Astrocyte of the cerebellum (primary cell): ENCODE measurements at regions of chr16 and their contacts with region 1.

Region 1: DNA sequence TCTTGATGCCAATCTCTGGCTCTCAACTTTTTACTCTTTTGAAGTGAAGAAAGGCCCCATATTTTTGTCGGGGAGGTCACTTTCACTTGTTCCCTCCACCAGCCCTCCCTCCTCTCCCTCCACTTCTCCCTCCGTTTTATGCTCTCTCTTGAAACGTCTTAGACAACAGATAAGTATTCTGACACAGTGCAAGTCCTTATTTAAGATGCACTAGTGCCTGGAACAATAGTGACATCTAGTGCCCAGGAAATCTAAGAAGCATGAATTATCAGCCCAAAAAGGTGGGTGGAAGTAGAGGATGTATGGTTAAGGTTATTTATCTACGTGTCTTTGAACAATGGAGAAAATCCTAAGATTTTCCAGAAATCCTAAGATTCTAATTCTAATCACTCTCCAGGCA is 17.9 kb downstream of the PSME3IP1 start:
- DNase-seq: peak; percentile 70
- H3K4me3 ChIP-seq: no peak overlapping the region
- CTCF ChIP-seq: peak; percentile 70

Region 2: DNA sequence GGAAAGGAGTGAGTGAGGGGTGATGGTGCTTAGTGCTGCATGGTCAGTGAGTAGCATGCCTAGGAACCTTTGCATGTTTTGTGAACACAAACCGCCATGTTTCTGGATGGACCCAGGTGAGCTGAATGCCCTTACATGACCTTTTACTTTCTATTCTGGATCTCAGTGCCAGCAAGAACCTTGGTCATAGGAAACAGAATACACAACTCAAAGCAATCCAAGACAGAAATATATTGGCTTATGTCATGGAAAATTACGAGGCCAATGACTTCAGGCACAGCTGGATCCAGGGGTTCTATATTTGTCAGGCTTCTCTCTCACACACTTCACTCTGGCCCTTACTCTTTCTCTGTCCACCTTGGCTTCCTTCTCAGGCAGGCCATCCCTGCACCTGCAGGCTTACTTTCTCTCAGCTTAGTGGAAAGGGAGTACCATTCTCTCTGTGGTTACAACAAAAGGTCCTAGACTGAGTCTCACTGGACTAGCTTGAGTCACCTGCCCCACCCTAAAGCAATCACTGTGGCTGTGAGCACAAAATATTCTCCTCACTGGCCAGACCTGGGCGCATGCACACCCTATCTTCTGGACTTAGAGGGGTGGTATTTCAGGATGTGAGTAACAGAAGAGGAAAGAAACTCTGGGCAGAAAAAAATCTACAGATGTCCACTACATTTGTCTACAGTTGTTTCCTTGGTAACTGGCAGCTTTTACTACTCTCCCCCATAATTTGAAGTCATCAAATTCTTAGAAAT is 95.9 kb before region 1 on chr16:
- in situ Hi-C with region 1: loop called (anchors 10 kb)
- DNase-seq: no peak
- H3K4me3 ChIP-seq: no peak overlapping the region
- CTCF ChIP-seq: no peak